ENCODE measurements at regions of chr22 and their contacts with region 1.

Region 1: DNA sequence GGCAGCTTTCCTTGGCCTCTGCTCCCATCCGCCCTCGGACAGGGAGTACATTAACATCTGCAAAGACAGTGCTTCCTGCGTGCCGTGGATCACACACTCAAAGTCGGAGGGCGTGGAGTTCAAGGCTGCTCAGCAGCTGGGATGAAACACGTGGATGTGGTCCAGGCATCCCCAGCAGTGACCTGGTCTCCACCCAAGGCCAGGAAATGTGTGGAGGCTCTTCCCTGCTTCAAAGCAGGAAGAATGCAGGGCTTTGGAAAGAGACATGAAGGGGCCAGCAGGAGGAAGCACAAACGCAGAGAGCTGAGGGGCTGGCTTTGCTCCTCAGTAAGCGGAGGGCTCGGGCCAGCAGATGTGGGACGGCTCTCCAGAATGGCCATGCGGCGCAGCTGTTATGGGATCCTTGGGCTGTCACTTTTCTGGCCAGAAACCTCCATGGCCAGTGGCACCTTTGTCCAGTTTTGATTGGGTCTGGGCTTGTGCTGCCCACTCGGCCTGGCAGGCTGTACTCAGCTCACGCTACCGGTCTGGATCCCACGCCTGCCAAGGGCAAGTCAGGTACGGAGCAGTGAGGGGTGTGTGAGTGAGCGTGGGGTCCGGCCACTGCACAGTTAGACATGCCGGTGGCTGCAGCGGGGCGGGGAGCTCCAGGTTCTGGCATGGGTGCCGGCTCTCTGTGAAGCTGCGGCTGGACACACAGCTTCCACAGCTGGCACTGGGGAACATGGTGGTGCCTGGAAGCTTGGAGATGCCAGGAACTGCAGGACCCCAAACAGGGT is 438.0 kb downstream of the TBC1D22A start:
- DNase-seq: no peak
- ATAC-seq: no peak
- H3K4me3 ChIP-seq: no peak overlapping the region
- H3K4me1 ChIP-seq: no peaks in the 10 kb centered on the region
- CTCF ChIP-seq: no peak

Region 2: DNA sequence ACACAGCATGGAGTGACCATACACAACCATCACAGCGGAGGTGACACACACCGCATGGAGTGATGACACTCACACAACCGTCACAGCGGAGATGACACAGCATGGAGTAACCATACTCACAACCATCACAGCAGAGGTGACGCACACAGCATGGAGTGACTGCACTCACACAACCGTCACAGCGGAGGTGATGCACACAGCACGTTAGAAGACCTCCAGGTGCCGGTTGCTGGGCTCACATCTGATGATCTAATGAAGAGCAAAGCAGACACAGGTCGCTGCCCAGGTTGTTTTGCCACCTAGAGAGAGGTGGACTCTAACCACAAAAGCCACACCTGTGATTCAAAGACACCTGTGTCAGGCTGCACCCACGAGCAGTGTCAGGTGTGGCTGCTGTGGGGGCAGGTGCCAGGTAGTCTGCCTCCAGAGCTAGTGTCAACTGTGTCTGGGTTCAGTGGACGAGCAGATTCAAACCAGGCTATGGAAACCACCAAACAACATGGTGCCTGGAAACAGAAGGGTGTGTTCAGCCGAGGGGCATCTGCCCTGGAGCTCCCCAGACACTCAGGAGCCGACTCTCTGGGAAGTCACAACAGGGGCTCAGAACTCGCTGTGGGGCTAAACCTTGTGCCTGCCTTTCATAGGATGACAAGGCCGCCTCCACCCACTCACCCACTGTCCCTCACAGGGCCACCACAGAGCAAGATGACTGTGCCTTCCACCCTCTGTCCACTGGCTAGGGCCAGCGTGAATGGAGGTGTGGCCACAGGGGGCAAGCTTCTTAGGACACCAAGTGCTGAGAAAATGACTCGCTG is 170.2 kb after region 1 on chr22:
- intact Hi-C with region 1: loop called in 1 of 2 experiments (anchors 5 kb)
- DNase-seq: no peak
- ATAC-seq: no peak
- H3K4me3 ChIP-seq: no peak overlapping the region
- H3K4me1 ChIP-seq: no peaks in the 10 kb centered on the region
- CTCF ChIP-seq: no peak